ENCODE measurements at regions of chr10 and their contacts with region 1.

Region 1: DNA sequence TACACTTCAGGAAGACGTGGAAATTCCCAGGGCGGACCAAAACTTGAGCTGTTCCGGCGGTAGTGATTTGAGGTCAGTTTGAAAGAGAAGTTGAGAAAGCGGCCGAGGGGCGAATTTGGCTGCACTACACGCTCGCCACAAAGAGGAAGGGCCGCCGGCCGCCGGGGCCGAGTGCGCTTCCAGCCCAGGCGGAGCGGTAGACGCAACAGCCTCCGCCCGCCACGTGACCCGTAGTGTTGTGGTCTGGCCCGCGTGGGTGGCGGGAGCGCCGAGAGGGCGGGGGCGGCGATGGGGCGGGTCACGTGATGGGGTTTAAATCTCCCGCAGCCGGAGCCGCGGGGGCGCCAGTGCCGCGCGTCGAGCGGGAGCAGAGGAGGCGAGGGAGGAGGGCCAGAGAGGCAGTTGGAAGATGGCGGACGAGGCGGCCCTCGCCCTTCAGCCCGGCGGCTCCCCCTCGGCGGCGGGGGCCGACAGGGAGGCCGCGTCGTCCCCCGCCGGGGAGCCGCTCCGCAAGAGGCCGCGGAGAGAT is at the start of gene SIRT1:
- DNase-seq: peak; percentile 97
- ATAC-seq: peak; percentile 81
- H3K4me3 Mint-ChIP-seq: peak within 1 kb of the TSS; percentile 92
- H3K27ac Mint-ChIP-seq: peak within 1 kb of the TSS; percentile 96
- H3K4me1 Mint-ChIP-seq: peaks cover 31% of the 10 kb centered on the region
- H3K27me3 Mint-ChIP-seq: no peaks in the 10 kb centered on the region
- CTCF ChIP-seq: no peak
- total RNA-seq, gene SIRT1: 30.1 and 31.6 TPM in 2 replicates

Region 2: DNA sequence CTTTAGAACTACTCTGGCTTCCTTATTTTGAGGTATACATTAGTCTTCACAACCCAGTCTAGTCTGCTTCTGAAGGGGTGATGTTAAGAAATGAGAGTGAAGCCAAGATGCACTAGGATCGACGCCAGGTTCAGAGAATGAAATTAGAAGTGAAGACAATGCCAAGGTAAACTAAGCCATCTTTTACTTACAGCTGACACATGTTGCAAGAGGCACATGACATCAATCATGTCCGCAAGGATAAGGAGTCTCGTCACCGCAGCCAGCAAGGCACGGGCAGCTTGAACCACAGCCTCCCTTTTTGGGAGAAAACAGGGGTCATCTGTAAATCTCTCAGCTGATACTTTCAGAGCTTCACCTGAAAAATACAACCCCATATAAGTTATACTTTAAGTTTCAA is 345.1 kb before region 1 on chr10:
- CTCF ChIA-PET with region 1: no interaction called
- POLR2A ChIA-PET with region 1: no interaction called
- intact Hi-C with region 1: no loop called
- DNase-seq: no peak
- ATAC-seq: no peak
- H3K4me3 Mint-ChIP-seq: no peak overlapping the region
- H3K27ac Mint-ChIP-seq: no peak overlapping the region
- H3K4me1 Mint-ChIP-seq: no peaks in the 10 kb centered on the region
- H3K27me3 Mint-ChIP-seq: peaks cover 5% of the 10 kb centered on the region
- CTCF ChIP-seq: no peak

Region 3: GRCh38 chr10:67764012-67764822 is 120.2 kb before region 1 on chr10:
- CTCF ChIA-PET with region 1: no interaction called
- POLR2A ChIA-PET with region 1: no interaction called
- intact Hi-C with region 1: loop called (anchors 1 kb)
- DNase-seq: peak; percentile 98
- ATAC-seq: peak; percentile 78
- H3K4me3 Mint-ChIP-seq: peak overlapping the region; percentile 94
- H3K27ac Mint-ChIP-seq: peak overlapping the region; percentile 99
- H3K4me1 Mint-ChIP-seq: peaks cover 31% of the 10 kb centered on the region
- H3K27me3 Mint-ChIP-seq: peaks cover 4% of the 10 kb centered on the region
- CTCF ChIP-seq: no peak

Region 4: GRCh38 chr10:67827811-67828210 is 56.6 kb before region 1 on chr10:
- CTCF ChIA-PET with region 1: no interaction called
- POLR2A ChIA-PET with region 1: interaction called, 14 read pairs
- intact Hi-C with region 1: no loop called
- DNase-seq: no peak
- ATAC-seq: no peak
- H3K4me3 Mint-ChIP-seq: no peak overlapping the region
- H3K27ac Mint-ChIP-seq: no peak overlapping the region
- H3K4me1 Mint-ChIP-seq: no peaks in the 10 kb centered on the region
- H3K27me3 Mint-ChIP-seq: no peaks in the 10 kb centered on the region
- CTCF ChIP-seq: no peak

Region 5: GRCh38 chr10:68406815-68407548 is 522.6 kb after region 1 on chr10 and contains the start of gene RUFY2:
- CTCF ChIA-PET with region 1: no interaction called
- POLR2A ChIA-PET with region 1: no interaction called
- intact Hi-C with region 1: loop called (anchors 1 kb)
- DNase-seq: peak; percentile 91
- ATAC-seq: peak; percentile 92
- H3K4me3 Mint-ChIP-seq: peak within 1 kb of the TSS; percentile 92
- H3K27ac Mint-ChIP-seq: peak within 1 kb of the TSS; percentile 85
- H3K4me1 Mint-ChIP-seq: peaks cover 15% of the 10 kb centered on the region
- H3K27me3 Mint-ChIP-seq: no peaks in the 10 kb centered on the region
- CTCF ChIP-seq: no peak
- total RNA-seq, gene RUFY2: 23.1 and 28.5 TPM in 2 replicates

Region 6: DNA sequence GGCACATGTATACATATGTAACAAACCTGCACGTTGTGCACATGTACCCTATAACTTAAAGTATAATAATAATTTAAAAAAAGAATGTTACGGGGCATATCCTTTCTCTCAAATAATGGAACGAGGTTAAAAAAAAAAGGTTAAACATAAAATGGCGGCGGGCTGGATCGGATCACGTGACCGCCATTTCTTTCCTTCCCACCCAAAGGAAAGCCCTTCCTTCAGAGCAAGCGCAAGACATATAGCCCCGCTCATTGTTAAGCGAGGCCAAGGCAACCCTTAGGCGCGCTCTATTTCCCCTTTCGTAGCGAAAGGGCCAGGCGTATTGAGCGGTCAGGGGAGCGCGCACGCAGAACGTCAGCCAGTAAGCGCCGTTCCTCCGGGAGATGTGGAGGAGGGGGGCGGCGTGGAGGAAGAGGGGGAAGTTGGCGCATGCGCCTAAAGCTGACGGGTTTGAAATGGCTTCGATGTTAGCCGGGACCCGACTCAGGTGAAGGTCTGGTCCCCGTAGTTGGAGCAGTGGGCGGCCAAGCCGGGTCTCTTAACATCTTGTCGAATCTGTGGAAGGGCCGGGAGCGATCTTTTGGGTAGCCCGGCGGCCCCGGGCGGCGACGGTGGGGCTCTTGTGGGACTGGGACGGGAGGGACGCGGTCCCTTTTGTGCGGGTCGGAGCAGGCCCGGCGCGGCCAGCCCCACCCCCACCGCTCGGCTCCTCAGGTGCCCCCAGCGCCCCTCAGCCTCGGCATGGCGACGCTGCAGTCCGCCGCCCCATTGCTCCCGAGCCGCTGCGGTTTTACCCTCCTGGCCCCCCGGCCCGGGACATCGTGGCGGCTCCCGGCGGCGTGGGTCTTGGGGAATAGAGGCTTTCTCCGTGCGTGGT is 836.7 kb after region 1 on chr10 and contains the start of gene CCAR1:
- CTCF ChIA-PET with region 1: no interaction called
- POLR2A ChIA-PET with region 1: interaction called, 3 read pairs
- intact Hi-C with region 1: loop called (anchors 1 kb)
- DNase-seq: peak; percentile 93
- ATAC-seq: peak; percentile 98
- H3K4me3 Mint-ChIP-seq: peak within 1 kb of the TSS; percentile 92
- H3K27ac Mint-ChIP-seq: peak within 1 kb of the TSS; percentile 98
- H3K4me1 Mint-ChIP-seq: peaks cover 14% of the 10 kb centered on the region
- H3K27me3 Mint-ChIP-seq: no peaks in the 10 kb centered on the region
- CTCF ChIP-seq: no peak
- total RNA-seq, gene CCAR1: 88.2 and 98.8 TPM in 2 replicates

Measured in activated B cell treated with CpG ODN at 0.5 μM for 24 hours (primary cell).